Body of pancreas (tissue), 4 donors: ENCODE measurements at regions of chr4 and their contacts with region 1.

Region 1: GRCh38 chr4:121096629-121097028 is 24.3 kb upstream of the NDNF start:
- DNase-seq: no peak
- ATAC-seq: no peak
- H3K4me3 ChIP-seq: no peak overlapping the region
- H3K27ac ChIP-seq: no peak overlapping the region
- H3K4me1 ChIP-seq: no peaks in the 10 kb centered on the region
- H3K27me3 ChIP-seq: no peaks in the 10 kb centered on the region
- CTCF ChIP-seq: peak; percentile 10 to 74 (median 60)
- POLR2A ChIP-seq: no peak

Region 2: GRCh38 chr4:120071192-120071795 is 1025.3 kb before region 1 on chr4:
- intact Hi-C with region 1: loop called (anchors 10 kb)
- DNase-seq: peak in 3 of 4 donors; percentile 41 to 63 (median 53)
- ATAC-seq: no peak
- H3K4me3 ChIP-seq: no peak overlapping the region
- H3K27ac ChIP-seq: no peak overlapping the region
- H3K4me1 ChIP-seq: peaks cover 11% of the 10 kb centered on the region
- H3K27me3 ChIP-seq: no peaks in the 10 kb centered on the region
- CTCF ChIP-seq: peak in 6 of 7 experiments; percentile 26 to 75 (median 62)
- POLR2A ChIP-seq: no peak

Region 3: DNA sequence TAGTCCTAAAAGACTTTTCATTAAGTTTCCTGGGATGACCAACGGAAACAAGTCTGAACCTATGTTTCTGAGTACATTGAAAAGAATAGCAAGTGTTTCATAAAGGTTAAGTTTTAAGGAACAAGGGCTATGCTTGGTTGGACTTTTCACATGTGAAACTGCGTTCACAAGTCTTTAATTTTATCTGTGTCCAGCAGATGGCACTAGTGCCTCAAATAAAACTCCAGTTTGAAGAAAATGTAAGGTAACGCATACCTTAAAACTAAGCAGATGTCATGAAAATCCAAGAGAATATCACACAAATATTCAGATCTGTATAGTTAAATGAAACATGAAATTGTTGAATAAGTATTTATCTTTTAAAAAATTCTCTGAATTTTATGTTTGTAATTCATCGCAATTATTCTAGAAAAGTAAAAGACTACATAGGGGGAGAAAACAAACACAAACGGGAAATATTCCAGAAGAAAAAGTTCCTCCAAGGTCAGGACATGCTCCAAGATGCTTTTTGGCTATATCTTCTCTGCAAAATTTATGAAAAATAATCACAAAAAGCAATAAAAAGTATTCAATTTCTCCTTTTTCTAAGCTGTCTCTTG is 940.4 kb before region 1 on chr4:
- intact Hi-C with region 1: loop called (anchors 5 kb)
- DNase-seq: peak in 3 of 4 donors; percentile 23 to 43 (median 24)
- ATAC-seq: peak; percentile 63
- H3K4me3 ChIP-seq: no peak overlapping the region
- H3K27ac ChIP-seq: no peak overlapping the region
- H3K4me1 ChIP-seq: no peaks in the 10 kb centered on the region
- H3K27me3 ChIP-seq: no peaks in the 10 kb centered on the region
- CTCF ChIP-seq: peak; percentile 38 to 80 (median 66)
- POLR2A ChIP-seq: no peak